ENCODE measurements at regions of chr1 and their contacts with region 1.

Region 1: DNA sequence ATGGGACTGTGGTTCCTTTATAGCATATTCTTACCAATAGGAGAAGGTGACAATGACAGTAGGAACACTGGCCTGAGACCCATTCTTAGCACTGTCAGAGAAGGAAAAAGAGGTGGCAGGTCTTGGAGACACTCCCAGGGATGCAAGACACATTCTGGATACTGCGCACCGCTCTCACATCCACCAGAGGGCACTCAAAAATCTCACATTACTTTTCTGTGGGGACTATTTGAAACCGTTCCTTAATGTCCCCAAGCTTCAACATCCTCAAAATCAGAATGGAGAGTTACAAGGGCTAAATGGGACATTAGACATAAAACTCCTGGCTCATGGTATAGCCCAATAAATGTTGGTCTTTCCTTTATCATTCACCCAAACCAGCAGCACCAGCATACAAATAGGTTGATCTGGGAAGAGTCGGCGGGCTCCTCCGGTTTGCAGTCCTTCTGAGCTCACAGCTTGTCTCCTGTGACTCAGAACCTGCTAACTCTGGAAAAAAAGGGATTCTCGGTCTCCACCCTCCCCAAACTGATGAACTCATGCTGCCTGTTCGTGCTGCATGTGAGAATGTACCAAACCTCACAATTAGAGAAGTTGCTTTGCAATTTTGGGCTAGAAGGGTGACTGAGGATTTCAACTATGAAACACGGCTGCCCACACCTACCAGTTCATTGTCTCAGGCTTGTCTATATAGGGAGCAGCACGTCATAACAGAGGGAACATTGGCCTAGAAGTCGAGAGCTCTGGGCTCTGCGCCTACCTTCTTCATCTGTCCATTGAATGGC is 40.2 kb downstream of the IL12RB2 start:
- DNase-seq: no peak
- ATAC-seq: no peak
- H3K4me3 Mint-ChIP-seq: no peak overlapping the region
- H3K27ac Mint-ChIP-seq: no peak overlapping the region
- H3K4me1 Mint-ChIP-seq: peaks cover 7% of the 10 kb centered on the region
- H3K27me3 Mint-ChIP-seq: no peaks in the 10 kb centered on the region
- CTCF ChIP-seq: no peak

Region 2: DNA sequence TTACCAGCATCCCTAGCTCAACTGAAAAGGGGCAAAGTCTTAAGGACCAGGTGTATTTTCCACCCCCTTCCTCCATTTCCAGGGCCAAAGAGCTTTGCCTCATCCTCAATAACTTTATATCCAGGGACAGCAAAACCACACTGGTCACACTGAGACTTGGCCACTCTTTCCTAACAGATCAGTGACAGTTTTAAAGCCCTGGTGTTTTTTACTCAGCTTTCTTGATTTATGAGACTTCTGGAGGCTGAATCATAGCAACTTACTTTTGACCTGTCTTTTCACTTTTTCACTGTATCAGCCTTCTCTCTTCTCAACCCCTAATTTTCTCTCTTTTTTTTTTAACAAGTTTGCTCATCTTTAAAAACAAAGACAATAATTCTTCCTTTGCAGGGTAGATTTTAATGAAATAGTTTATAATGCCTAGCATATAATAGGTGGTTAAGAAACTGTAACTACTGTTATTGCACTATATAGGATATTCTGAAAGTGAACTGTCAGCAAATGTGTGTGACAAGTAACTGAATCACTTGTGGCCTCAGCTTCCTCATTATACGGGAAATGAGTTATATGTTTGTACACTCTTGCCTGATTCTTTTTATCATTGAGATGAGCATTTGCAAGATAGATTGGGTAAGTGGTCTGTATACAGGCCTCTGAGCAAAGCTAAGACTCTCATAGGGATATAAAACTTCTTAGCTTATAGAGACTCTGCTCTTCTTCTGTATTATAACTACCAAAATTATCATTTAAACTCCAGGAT is 615.3 kb before region 1 on chr1:
- CTCF ChIA-PET with region 1: no interaction called
- POLR2A ChIA-PET with region 1: no interaction called
- intact Hi-C with region 1: no loop called
- DNase-seq: no peak
- ATAC-seq: no peak
- H3K4me3 Mint-ChIP-seq: no peak overlapping the region
- H3K27ac Mint-ChIP-seq: no peak overlapping the region
- H3K4me1 Mint-ChIP-seq: peaks cover 3% of the 10 kb centered on the region
- H3K27me3 Mint-ChIP-seq: peaks cover 2% of the 10 kb centered on the region
- CTCF ChIP-seq: no peak

Region 3: DNA sequence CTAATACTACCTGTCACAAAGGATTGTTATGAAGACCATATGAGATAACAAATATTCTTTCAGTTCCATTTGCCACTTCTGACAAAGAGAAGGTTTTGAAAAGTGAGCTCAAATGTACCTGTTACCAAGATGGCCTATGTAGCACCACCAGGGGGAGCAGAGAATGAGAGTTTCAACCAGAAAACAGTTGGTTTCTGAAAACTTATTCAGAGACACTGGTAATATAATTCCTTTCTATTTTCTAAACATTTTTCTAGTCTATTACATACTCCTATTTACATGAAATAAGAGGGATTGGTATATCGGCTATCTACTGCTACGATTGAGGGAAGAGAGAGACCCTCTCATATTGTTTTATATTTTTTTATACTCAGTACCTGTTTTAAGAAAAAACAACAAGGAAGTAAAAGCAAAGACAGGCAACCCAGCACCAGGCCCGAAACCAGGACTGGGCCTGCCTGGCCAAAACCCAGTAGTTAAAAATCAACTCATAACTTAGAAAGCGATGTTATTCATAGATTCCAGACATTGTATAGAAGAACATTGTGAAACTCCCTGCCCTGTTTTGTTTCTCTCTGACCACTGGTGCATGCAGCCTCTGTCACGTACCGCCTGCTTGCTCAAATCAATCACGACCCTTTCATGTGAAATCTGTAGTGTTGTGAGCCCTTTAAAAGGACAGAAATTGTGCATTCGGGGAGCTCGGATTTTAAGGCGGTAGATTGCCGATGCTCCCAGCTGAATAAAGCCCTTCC is 133.3 kb before region 1 on chr1:
- CTCF ChIA-PET with region 1: no interaction called
- POLR2A ChIA-PET with region 1: no interaction called
- intact Hi-C with region 1: loop called (anchors 5 kb)
- DNase-seq: no peak
- ATAC-seq: peak; percentile 62
- H3K4me3 Mint-ChIP-seq: no peak overlapping the region
- H3K27ac Mint-ChIP-seq: no peak overlapping the region
- H3K4me1 Mint-ChIP-seq: peaks cover 9% of the 10 kb centered on the region
- H3K27me3 Mint-ChIP-seq: no peaks in the 10 kb centered on the region
- CTCF ChIP-seq: no peak

Region 4: DNA sequence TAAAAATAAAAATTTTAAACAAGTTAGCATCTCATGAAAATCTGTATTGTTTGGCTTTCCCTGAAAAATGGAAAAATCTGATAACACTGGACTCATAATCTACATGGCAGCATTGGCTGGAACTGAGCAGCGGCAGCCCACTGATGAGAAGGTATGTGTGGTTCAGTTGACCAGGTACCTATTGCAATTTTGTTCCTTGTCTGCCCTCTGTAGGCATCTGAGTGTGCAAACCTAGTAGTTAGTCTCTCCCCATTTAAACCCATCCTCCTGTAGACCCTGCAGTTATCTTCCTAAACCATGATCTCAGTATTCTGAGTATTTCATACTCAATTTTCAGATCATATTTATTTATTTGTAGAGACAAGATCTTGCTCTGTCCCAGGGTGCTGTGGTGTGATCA is 141.8 kb after region 1 on chr1:
- CTCF ChIA-PET with region 1: interaction called, 3 read pairs
- POLR2A ChIA-PET with region 1: no interaction called
- intact Hi-C with region 1: loop called (anchors 1 kb)
- DNase-seq: no peak
- ATAC-seq: peak; percentile 42
- H3K4me3 Mint-ChIP-seq: no peak overlapping the region
- H3K27ac Mint-ChIP-seq: no peak overlapping the region
- H3K4me1 Mint-ChIP-seq: no peaks in the 10 kb centered on the region
- H3K27me3 Mint-ChIP-seq: peaks cover 5% of the 10 kb centered on the region
- CTCF ChIP-seq: no peak

Measured in activated B cell treated with CpG ODN at 0.5 μM for 24 hours (primary cell).